ENCODE measurements at regions of chr11 and their contacts with region 1.

Region 1: GRCh38 chr11:20647976-20648565 is 21.3 kb upstream of the NELL1 start:
- DNase-seq: peak; percentile 55
- H3K4me3 ChIP-seq: no peak overlapping the region
- H3K27ac ChIP-seq: no peak overlapping the region
- H3K4me1 ChIP-seq: no peaks in the 10 kb centered on the region
- H3K27me3 ChIP-seq: no peaks in the 10 kb centered on the region
- CTCF ChIP-seq: peak; percentile 67 to 78
- POLR2A ChIP-seq: no peak

Region 2: GRCh38 chr11:20563866-20564265 is 84.2 kb before region 1 on chr11:
- CTCF ChIA-PET with region 1: no interaction called
- POLR2A ChIA-PET with region 1: no interaction called
- dilution Hi-C with region 1: no loop called
- intact Hi-C with region 1: no loop called
- DNase-seq: no peak
- H3K4me3 ChIP-seq: no peak overlapping the region
- H3K27ac ChIP-seq: no peak overlapping the region
- H3K4me1 ChIP-seq: no peaks in the 10 kb centered on the region
- H3K27me3 ChIP-seq: no peaks in the 10 kb centered on the region
- CTCF ChIP-seq: no peak
- POLR2A ChIP-seq: no peak

Region 3: GRCh38 chr11:20671856-20672546 is 23.9 kb after region 1 on chr11:
- CTCF ChIA-PET with region 1: interaction called, 10 read pairs
- POLR2A ChIA-PET with region 1: no interaction called
- dilution Hi-C with region 1: no loop called
- intact Hi-C with region 1: loop called (anchors 1 kb)
- DNase-seq: no peak
- H3K4me3 ChIP-seq: no peak overlapping the region
- H3K27ac ChIP-seq: no peak overlapping the region
- H3K4me1 ChIP-seq: no peaks in the 10 kb centered on the region
- H3K27me3 ChIP-seq: peaks cover 33 to 48% of the 10 kb centered on the region in 2 experiments
- CTCF ChIP-seq: no peak
- POLR2A ChIP-seq: no peak

Region 4: DNA sequence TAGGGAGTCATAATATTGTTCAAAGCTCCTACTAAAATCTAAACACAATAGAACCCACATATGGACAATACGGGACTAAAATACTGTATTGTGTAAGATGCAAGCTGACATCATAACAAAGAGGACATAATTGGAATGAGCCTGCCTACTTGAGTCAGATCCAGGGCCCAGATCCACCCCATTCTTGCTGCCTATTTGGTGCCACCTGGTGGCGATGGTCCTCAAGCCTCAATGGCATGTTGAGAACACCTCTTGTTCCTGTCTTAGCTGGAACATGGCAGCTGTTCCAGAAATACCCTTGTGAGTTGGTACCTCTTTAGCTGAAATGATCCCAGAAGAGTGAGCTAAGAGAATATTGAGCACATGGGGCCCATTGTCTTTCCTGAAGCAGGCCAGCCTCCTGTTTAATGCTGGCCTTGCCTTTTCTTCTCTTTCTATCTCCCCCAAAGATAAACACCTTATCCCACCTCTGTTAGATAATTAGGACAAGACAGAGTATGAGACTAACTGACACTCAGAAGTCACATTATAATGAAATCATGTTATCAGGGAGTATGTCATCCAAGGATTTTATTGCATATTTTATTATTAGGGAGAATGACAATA is 863.9 kb after region 1 on chr11:
- CTCF ChIA-PET with region 1: no interaction called
- POLR2A ChIA-PET with region 1: no interaction called
- dilution Hi-C with region 1: no loop called
- intact Hi-C with region 1: loop called (anchors 2 kb)
- DNase-seq: no peak
- H3K4me3 ChIP-seq: no peak overlapping the region
- H3K27ac ChIP-seq: no peak overlapping the region
- H3K4me1 ChIP-seq: no peaks in the 10 kb centered on the region
- H3K27me3 ChIP-seq: no peaks in the 10 kb centered on the region
- CTCF ChIP-seq: no peak
- POLR2A ChIP-seq: no peak